ENCODE measurements at regions of chr13 and their contacts with region 1.

Region 1: GRCh38 chr13:30114571-30115256 is 192.6 kb downstream of the KATNAL1 start:
- DNase-seq: peak; percentile 77 to 85 (median 79)
- ATAC-seq: peak; percentile 97
- H3K4me3 ChIP-seq: peak overlapping the region; percentile 51
- H3K27ac ChIP-seq: no peak overlapping the region
- H3K4me1 ChIP-seq: peaks cover 5 to 9% of the 10 kb centered on the region in 2 experiments; a peak in 4 of 5 replicates
- H3K27me3 ChIP-seq: peaks cover 0 to 15% of the 10 kb centered on the region in 2 experiments
- CTCF ChIP-seq: peak; percentile 72 to 89 (median 75)
- EP300 ChIP-seq: no peak
- POLR2A ChIP-seq: no peak
- RAD21 ChIP-seq: peak; percentile 53 to 66

Region 2: DNA sequence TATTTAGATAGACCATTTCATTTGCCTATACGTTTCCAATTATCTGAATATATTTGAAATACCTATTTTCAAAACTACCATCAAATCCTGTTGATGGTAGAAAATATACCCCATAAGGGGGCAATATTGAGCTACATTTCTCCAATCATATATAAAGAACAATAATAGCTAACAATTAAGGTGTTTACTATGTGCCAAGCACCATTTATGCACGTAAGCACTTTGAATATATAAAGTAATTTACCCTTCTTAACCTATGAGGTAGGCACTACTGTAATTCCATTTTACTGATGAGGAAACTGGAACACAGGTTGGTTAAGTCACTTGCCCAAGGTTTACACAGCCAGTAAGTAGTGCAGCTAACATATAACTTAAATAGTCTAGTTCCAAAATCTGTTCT is 343.5 kb before region 1 on chr13:
- CTCF ChIA-PET with region 1: interaction called, 6 read pairs
- POLR2A ChIA-PET with region 1: no interaction called
- in situ Hi-C with region 1: loop called (anchors 10 kb)
- intact Hi-C with region 1: loop called (anchors 2 kb)
- DNase-seq: peak in 1 of 4 experiments; percentile 9
- ATAC-seq: no peak
- H3K4me3 ChIP-seq: no peak overlapping the region
- H3K27ac ChIP-seq: no peak overlapping the region
- H3K4me1 ChIP-seq: no peaks in the 10 kb centered on the region
- H3K27me3 ChIP-seq: no peaks in the 10 kb centered on the region
- CTCF ChIP-seq: peak in 2 of 3 experiments; percentile 27 to 48; a peak in 2 of 6 replicates
- EP300 ChIP-seq: no peak
- POLR2A ChIP-seq: no peak
- RAD21 ChIP-seq: peak in 1 of 2 experiments; percentile 50; a peak in 3 of 4 replicates

Region 3: DNA sequence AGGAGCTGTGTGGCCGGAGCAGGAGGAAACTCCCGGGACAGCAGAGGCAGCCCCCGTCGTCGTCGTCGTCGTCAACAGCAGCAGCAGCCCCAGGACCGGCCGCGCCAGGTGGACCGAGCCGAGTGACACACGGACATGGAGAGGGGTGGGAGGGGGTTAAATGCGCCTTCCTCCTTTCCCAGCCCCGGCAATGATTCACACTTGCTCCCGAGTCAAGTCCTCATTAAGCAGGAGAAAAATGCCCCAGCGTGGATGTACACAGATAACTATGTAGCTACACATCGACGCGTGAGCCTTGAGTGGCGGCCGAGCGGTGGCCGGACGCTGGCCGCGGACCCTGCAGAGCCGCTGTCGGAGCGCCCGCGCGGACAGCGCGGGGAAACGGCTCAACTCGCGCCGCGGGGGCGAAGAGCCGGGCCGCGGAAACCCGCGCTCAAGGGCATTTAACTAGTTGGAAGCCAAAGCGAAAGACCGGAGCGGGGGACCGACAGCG is 264.9 kb before region 1 on chr13:
- CTCF ChIA-PET with region 1: no interaction called
- POLR2A ChIA-PET with region 1: no interaction called
- in situ Hi-C with region 1: no loop called
- intact Hi-C with region 1: loop called (anchors 5 kb)
- DNase-seq: peak; percentile 12 to 41 (median 24)
- ATAC-seq: peak; percentile 76
- H3K4me3 ChIP-seq: peak overlapping the region; percentile 72
- H3K27ac ChIP-seq: peak overlapping the region; percentile 66; the same call in 1 of the 3 replicates
- H3K4me1 ChIP-seq: peaks cover 3 to 7% of the 10 kb centered on the region in 2 experiments; a peak in 3 of 5 replicates
- H3K27me3 ChIP-seq: peaks cover 0 to 4% of the 10 kb centered on the region in 2 experiments; a peak in 1 of 5 replicates
- CTCF ChIP-seq: no peak
- EP300 ChIP-seq: no peak
- POLR2A ChIP-seq: no peak
- RAD21 ChIP-seq: no peak

Region 4: DNA sequence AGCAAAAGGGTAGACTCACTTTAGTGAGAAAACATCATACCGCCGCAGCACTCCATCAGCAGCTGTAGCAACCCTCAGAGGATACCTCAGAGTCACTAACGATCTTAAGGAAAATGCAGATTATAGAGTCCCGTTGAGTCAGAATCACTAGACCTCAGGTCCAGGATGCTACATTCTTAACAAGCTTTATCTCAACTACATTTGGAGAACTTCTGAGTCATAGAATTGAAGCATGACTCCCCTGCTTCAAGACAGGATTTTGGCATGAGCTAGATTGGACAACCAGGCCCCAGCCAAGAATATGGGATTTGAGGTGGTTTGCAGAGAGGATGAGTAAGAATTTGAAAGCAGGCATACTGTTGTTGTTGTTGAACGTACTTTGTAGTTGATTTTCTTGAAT is 145.4 kb before region 1 on chr13:
- CTCF ChIA-PET with region 1: no interaction called
- POLR2A ChIA-PET with region 1: no interaction called
- in situ Hi-C with region 1: no loop called
- intact Hi-C with region 1: loop called (anchors 10 kb)
- DNase-seq: no peak
- ATAC-seq: no peak
- H3K4me3 ChIP-seq: no peak overlapping the region
- H3K27ac ChIP-seq: no peak overlapping the region
- H3K4me1 ChIP-seq: no peaks in the 10 kb centered on the region
- H3K27me3 ChIP-seq: no peaks in the 10 kb centered on the region; a peak in 1 of 5 replicates
- CTCF ChIP-seq: no peak
- EP300 ChIP-seq: no peak
- POLR2A ChIP-seq: no peak
- RAD21 ChIP-seq: no peak

Region 5: GRCh38 chr13:30071969-30072817 is 42.5 kb before region 1 on chr13:
- CTCF ChIA-PET with region 1: no interaction called
- POLR2A ChIA-PET with region 1: no interaction called
- in situ Hi-C with region 1: no loop called
- intact Hi-C with region 1: no loop called
- DNase-seq: no peak
- ATAC-seq: no peak
- H3K4me3 ChIP-seq: no peak overlapping the region
- H3K27ac ChIP-seq: no peak overlapping the region
- H3K4me1 ChIP-seq: no peaks in the 10 kb centered on the region
- H3K27me3 ChIP-seq: no peaks in the 10 kb centered on the region; a peak in 1 of 5 replicates
- CTCF ChIP-seq: no peak
- EP300 ChIP-seq: no peak
- POLR2A ChIP-seq: no peak
- RAD21 ChIP-seq: no peak